Cardiac septum (tissue), 1 donor: ENCODE measurements at regions of chr20 and their contacts with region 1.

Region 1: DNA sequence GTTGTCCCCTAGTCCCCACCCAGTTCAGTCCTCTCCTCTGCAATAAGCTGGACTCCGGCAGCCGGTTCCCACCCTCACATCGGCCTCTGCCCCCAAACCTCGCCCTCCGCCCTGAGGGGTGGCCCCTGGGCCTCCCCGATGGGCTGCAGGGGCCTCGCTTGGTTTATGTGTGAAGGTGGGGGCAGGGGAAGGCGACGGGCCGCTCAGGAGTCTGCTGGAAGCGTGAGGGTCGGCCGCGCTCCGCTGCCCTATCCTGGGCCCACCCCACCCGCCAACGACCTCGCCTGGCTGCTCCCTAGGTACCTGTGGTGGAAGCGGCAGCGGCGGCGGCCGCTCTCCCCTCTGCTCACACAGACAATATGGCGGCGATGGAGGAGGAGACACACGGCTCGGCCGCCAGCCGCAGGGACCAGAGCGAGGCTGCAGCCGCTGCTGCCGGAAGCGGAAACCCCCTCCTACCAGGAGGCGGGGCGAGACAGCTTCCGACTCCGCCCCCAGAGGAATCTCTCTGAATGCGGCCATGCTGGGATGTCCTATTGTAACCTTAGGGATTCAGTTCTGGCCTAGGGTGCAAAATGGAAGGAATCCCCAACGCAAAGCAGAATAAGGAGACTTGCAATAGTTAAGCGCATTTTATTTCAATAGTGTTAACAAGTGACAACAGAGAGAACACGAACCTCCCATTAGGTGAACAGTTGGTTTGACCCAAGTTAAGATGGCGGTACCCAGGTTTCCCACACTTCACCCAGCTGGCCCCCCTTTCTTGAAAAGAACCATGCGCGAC is at the start of gene CSNK2A1:
- DNase-seq: peak; percentile 98
- total RNA-seq, gene CSNK2A1: 111 TPM

Region 2: GRCh38 chr20:347640-348484 is 195.7 kb before region 1 on chr20:
- intact Hi-C with region 1: loop called (anchors 5 kb)
- DNase-seq: peak; percentile 93

Region 3: DNA sequence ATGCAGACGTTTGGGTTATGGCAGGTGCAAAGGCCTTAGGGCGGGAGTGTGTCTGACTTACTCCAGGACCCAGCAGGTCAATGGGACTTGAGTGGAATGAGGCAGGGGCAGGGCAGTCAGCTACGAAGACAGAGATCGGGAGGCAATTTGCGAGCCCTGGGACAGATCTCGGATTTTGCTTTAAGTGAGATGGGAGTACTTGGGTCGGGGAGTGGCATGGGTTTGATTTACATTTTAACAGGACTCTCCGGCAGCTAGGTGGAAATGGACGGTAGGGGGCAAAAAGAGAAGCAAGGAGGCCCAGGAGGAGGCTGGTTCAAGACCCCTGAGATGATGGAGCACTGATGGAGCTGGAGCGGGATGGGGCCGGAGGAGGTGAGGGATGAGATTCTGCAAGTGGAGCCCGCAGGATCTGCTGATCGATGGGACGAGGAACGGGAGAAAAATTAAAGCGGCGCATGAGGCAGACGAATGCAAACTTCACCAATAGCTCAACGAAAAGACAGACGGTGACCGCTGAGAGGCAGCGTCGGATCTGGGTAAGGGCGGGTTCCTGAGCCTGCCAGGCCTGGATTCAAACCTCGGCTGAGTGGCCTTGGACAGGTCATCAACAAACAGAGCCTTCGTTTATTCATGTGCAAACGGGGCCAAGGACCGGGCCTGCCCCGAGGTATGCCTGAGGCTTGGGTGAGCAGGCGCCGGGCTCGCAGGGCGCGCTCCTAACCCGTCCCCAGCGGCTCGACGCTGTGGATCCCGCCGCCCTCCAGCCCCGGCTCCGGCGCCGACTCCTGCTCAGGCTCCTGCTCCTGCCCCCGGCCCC is 136.2 kb before region 1 on chr20:
- intact Hi-C with region 1: loop called (anchors 2 kb)
- DNase-seq: peak; percentile 83